ENCODE measurements at regions of chr4 and their contacts with region 1.

Region 1: GRCh38 chr4:157045507-157046127 is 30.3 kb upstream of the GLRB start:
- DNase-seq: peak; percentile 14
- H3K4me3 ChIP-seq: no peak overlapping the region
- H3K27me3 ChIP-seq: no peaks in the 10 kb centered on the region
- CTCF ChIP-seq: peak; percentile 87

Region 2: GRCh38 chr4:156475322-156475721 is 570.3 kb before region 1 on chr4:
- CTCF ChIA-PET with region 1: interaction called, 27 read pairs
- POLR2A ChIA-PET with region 1: no interaction called
- DNase-seq: no peak
- H3K4me3 ChIP-seq: no peak overlapping the region
- H3K27me3 ChIP-seq: no peaks in the 10 kb centered on the region
- CTCF ChIP-seq: peak; percentile 57

Region 3: GRCh38 chr4:156870131-156870530 is 175.5 kb before region 1 on chr4:
- CTCF ChIA-PET with region 1: no interaction called
- POLR2A ChIA-PET with region 1: no interaction called
- DNase-seq: no peak
- H3K4me3 ChIP-seq: no peak overlapping the region
- H3K27me3 ChIP-seq: no peaks in the 10 kb centered on the region
- CTCF ChIP-seq: no peak

Region 4: GRCh38 chr4:157035471-157035870 is 10.1 kb before region 1 on chr4:
- CTCF ChIA-PET with region 1: interaction called, 13 read pairs
- POLR2A ChIA-PET with region 1: no interaction called
- DNase-seq: no peak
- H3K4me3 ChIP-seq: no peak overlapping the region
- H3K27me3 ChIP-seq: no peaks in the 10 kb centered on the region
- CTCF ChIP-seq: no peak

Region 5: GRCh38 chr4:157075811-157076577 is 30.4 kb after region 1 on chr4 and contains the start of gene GLRB:
- CTCF ChIA-PET with region 1: no interaction called
- POLR2A ChIA-PET with region 1: no interaction called
- DNase-seq: no peak
- H3K4me3 ChIP-seq: peak within 1 kb of the TSS; percentile 76
- H3K27me3 ChIP-seq: no peaks in the 10 kb centered on the region
- CTCF ChIP-seq: no peak
- polyA plus RNA-seq, gene GLRB: 4.8 and 9.5 TPM in 2 replicates

Measured in BJ (cell line).